ENCODE measurements at regions of chr1 and their contacts with region 1.

Region 1: GRCh38 chr1:1291548-1292441 is 11.6 kb downstream of the SCNN1D start:
- DNase-seq: peak; percentile 84
- H3K4me3 ChIP-seq: no peak overlapping the region
- H3K27ac ChIP-seq: no peak overlapping the region
- H3K4me1 ChIP-seq: peaks cover 0 to 6% of the 10 kb centered on the region in 2 experiments; a peak in 1 of 4 replicates
- H3K27me3 ChIP-seq: no peaks in the 10 kb centered on the region
- CTCF ChIP-seq: peak; percentile 57
- EP300 ChIP-seq: no peak
- RAD21 ChIP-seq: peak; percentile 70

Region 2: GRCh38 chr1:1273512-1274298 is 18.1 kb before region 1 on chr1 and contains the start of gene UBE2J2:
- CTCF ChIA-PET with region 1: interaction called, 10 read pairs
- POLR2A ChIA-PET with region 1: interaction called, 4 read pairs
- DNase-seq: peak; percentile 100
- H3K4me3 ChIP-seq: peak within 1 kb of the TSS; percentile 76 to 84
- H3K27ac ChIP-seq: peak within 1 kb of the TSS; percentile 47 to 68; a peak in 3 of 4 replicates
- H3K4me1 ChIP-seq: peaks cover 0 to 28% of the 10 kb centered on the region in 2 experiments; a peak in 1 of 4 replicates
- H3K27me3 ChIP-seq: no peaks in the 10 kb centered on the region
- CTCF ChIP-seq: no peak
- EP300 ChIP-seq: no peak
- RAD21 ChIP-seq: no peak
- polyA plus RNA-seq, gene UBE2J2: 31.8 and 47.5 TPM in 2 replicates

Region 3: DNA sequence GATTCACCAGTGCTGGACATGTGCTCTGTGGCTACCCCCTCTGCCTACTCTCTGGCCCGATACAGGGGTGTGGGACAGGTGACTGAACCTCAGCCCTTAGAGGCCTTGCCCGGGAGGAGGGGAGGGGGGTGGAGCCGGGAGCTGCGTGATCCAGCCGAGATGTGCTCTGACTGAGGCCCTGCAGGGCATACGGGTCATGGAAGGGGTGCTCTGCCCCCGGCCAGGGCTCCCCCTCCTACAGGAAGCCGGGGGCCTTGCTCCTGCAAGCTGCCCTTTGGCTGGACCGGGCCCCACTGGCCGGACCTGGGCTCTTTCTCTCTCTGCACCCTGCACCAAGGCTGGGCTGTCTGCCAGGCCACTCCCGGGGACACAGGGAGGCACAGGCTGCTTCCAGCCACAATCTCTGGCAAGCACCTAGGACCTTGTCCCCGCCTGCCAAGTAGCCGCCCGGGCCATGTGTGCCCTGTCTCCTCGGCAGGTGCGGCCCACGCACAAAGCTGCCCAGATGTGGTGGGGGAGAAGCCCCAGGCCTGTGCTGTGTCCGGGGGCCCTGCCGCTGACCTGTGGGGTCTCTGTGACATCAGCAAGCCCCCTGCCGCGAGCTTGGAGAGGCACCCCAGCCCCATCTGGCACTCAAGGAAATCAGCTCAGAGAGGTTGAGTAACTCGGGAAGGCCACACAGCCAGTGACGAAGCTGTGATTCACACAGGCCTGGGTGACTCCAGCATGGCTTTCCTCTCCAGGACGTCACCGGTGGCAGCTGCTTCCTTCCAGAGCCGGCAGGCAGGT is 10.1 kb before region 1 on chr1:
- CTCF ChIA-PET with region 1: interaction called, 18 read pairs
- POLR2A ChIA-PET with region 1: interaction called, 4 read pairs
- DNase-seq: peak; percentile 55
- H3K4me3 ChIP-seq: no peak overlapping the region
- H3K27ac ChIP-seq: no peak overlapping the region
- H3K4me1 ChIP-seq: peaks cover 0 to 9% of the 10 kb centered on the region in 2 experiments; a peak in 1 of 4 replicates
- H3K27me3 ChIP-seq: no peaks in the 10 kb centered on the region
- CTCF ChIP-seq: no peak
- EP300 ChIP-seq: no peak
- RAD21 ChIP-seq: no peak

Region 4: GRCh38 chr1:1305300-1306069 is 13.7 kb after region 1 on chr1:
- CTCF ChIA-PET with region 1: interaction called, 44 read pairs
- POLR2A ChIA-PET with region 1: interaction called, 4 read pairs
- DNase-seq: no peak
- H3K4me3 ChIP-seq: peak overlapping the region; percentile 73 to 91
- H3K27ac ChIP-seq: peak overlapping the region; percentile 68 to 97
- H3K4me1 ChIP-seq: peaks cover 13 to 50% of the 10 kb centered on the region in 2 experiments; a peak in 2 of 4 replicates
- H3K27me3 ChIP-seq: no peaks in the 10 kb centered on the region
- CTCF ChIP-seq: no peak
- EP300 ChIP-seq: no peak
- RAD21 ChIP-seq: no peak

Measured in SK-N-SH (cell line).